ENCODE measurements at regions of chr1 and their contacts with region 1.

Region 1: GRCh38 chr1:161225534-161226319 is at the start of gene TOMM40L:
- DNase-seq: peak; percentile 87
- H3K4me3 Mint-ChIP-seq: peak within 1 kb of the TSS; percentile 99
- H3K27ac Mint-ChIP-seq: peak within 1 kb of the TSS; percentile 100
- H3K4me1 Mint-ChIP-seq: peaks cover 24% of the 10 kb centered on the region
- H3K27me3 Mint-ChIP-seq: peaks cover 3% of the 10 kb centered on the region
- total RNA-seq, gene TOMM40L: 25.3 and 28.0 TPM in 2 replicates

Region 2: GRCh38 chr1:160575112-160575664 is 650.5 kb before region 1 on chr1:
- intact Hi-C with region 1: no loop called
- DNase-seq: no peak
- H3K4me3 Mint-ChIP-seq: peak overlapping the region; percentile 79
- H3K27ac Mint-ChIP-seq: peak overlapping the region; percentile 84
- H3K4me1 Mint-ChIP-seq: peaks cover 96% of the 10 kb centered on the region
- H3K27me3 Mint-ChIP-seq: no peaks in the 10 kb centered on the region

Region 3: DNA sequence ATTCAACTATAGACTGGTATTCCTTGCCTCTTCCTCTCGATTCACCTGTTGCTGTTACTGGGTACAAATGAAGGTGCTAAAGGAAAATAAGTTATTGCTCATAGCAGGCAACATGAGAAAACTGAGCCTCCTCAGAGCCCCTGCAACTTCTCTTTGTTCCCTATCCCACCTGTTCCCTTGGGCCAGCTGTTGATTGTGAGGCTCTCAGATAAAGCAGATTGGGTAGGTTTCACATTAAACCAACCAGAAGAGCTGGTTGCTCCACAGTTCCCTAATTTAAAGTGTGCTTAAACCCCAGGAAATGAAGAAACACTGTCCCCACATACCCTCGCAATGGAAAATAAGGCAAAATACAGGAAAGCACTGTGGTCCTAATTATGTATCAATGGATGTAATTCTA is 98.1 kb before region 1 on chr1:
- intact Hi-C with region 1: no loop called
- DNase-seq: no peak
- H3K4me3 Mint-ChIP-seq: no peak overlapping the region
- H3K27ac Mint-ChIP-seq: no peak overlapping the region
- H3K4me1 Mint-ChIP-seq: peaks cover 53% of the 10 kb centered on the region
- H3K27me3 Mint-ChIP-seq: no peaks in the 10 kb centered on the region

Region 4: GRCh38 chr1:161159087-161159912 is 66.4 kb before region 1 on chr1 and contains the start of gene USP21:
- intact Hi-C with region 1: loop called (anchors 2 kb)
- DNase-seq: peak; percentile 91
- H3K4me3 Mint-ChIP-seq: peak within 1 kb of the TSS; percentile 88
- H3K27ac Mint-ChIP-seq: peak within 1 kb of the TSS; percentile 86
- H3K4me1 Mint-ChIP-seq: peaks cover 64% of the 10 kb centered on the region
- H3K27me3 Mint-ChIP-seq: no peaks in the 10 kb centered on the region
- total RNA-seq, gene USP21: 32.9 and 38.2 TPM in 2 replicates

Region 5: DNA sequence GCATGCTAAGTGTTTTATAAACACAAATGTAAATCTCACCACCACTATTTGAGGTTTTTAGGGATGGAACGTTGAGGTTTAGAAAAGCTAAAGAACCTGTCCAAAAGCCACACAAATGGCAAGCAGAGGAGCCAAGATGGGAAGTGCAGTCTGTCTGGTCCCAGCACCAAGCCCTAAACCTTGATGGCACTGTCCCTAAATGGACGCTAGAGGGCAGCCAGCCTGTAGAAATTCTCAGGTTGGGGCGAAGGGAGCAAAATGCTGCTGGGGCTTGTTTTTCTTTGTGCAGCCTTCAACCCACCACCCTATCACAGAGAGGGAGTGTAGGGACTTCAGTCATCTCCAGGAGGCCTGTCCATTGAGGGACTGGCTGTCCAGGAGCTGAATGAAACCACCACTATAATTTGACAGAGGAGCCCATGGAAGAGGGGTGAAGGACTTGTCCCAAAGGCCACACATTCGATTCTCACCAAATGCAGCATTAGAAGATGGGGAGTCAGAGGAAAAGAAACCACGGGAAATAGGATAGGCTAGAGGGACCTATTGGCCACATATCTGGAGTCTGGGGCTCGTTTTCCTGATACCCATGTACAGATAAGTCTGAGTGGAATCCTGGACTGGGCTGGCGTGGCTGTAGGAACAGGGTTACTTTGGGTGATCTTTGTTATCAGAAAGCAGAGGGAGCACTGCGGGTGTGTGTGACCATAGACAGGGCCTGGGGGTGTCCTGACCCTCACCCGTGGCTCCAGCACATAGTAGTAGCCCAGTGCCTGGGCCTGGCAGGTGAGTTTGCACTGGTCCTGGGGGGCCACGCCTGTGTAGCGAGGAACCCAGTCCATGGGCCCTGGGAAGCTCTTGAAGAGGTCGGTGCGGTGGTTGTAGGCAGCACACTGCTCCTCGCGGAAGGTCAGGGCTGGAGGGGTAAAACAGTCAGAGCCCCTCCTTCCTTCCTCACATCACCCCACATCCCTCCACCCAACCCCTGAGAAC is 33.0 kb before region 1 on chr1:
- intact Hi-C with region 1: loop called (anchors 1 kb)
- DNase-seq: peak; percentile 63
- H3K4me3 Mint-ChIP-seq: no peak overlapping the region
- H3K27ac Mint-ChIP-seq: peak overlapping the region; percentile 67
- H3K4me1 Mint-ChIP-seq: peaks cover 53% of the 10 kb centered on the region
- H3K27me3 Mint-ChIP-seq: no peaks in the 10 kb centered on the region

Region 6: DNA sequence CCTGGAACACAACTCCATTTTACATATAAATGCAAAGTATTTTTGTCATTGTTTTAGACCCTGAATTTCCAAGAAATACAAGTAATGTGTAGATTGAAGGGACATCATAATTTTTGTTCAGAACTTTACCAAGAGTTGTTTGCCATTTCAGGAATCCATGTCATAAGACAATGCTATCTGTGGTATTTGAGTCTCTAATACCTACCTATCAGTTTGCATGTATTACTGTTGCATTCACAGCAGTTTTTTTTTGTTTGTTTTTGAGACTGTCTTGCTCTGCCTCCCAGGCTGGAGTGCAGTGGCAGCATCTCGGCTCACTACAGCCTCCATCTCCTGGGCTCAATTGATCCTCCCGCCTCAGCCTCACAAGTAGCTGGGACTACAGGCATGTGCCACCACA is 66.9 kb after region 1 on chr1:
- intact Hi-C with region 1: loop called (anchors 1 kb)
- DNase-seq: no peak
- H3K4me3 Mint-ChIP-seq: no peak overlapping the region
- H3K27ac Mint-ChIP-seq: no peak overlapping the region
- H3K4me1 Mint-ChIP-seq: no peaks in the 10 kb centered on the region
- H3K27me3 Mint-ChIP-seq: no peaks in the 10 kb centered on the region

Region 7: DNA sequence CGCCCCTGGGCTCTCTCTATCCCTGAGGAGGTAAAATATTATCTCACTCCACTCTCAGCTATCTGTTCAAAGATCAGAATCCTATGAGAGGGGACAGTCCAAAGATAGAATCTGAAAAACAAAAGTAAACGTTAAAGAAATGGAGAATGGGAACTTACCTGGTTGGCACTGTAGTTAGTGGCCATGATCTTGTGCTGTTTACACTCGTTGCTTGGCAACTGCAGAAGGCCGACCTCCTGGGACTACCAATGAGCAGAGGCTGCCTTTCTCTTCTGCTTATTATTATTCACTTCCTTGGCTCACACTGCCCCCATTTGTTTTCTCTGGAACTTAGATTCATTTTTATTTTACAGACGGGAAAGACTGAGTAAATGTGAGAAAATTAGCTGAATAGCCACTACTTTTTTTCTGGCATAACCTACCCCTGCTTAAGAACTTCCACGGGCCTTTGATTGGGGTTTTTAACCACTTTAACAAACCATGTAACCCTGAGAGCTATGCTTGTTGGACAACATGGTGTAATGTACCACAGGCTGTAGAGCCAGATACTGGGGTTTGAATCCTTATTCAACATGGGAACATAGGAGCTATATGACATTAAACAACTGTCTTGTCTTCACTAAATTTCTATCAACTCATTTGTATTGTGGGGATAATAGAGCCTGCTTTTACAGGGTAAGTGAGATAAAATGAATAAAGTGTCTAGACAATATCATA is 142.1 kb after region 1 on chr1 and contains the start of gene CFAP126:
- intact Hi-C with region 1: loop called (anchors 5 kb)
- DNase-seq: no peak
- H3K4me3 Mint-ChIP-seq: no peak within 1 kb of the TSS
- H3K27ac Mint-ChIP-seq: peak within 1 kb of the TSS; percentile 25
- H3K4me1 Mint-ChIP-seq: peaks cover 21% of the 10 kb centered on the region
- H3K27me3 Mint-ChIP-seq: no peaks in the 10 kb centered on the region
- total RNA-seq, gene CFAP126: not detected in 2 replicates

Region 8: DNA sequence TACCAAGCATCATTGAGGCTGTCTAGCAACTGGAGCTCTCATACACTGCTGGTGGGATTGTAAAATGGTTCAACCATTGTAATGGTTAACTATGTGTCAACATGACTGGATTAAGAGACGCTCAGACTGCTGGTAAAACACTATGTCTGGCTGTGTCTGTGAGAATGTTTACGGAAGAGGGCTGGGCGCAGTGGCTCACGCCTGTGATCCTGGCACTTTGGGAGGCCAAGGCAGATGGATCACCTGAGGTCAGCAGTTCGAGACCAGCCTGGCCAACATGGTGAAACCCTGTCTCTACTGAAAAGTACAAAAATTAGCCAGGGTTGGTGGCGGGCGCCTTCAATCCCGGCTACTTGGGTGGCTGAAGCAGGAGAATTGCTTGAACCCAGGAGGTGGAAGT is 476.5 kb after region 1 on chr1:
- intact Hi-C with region 1: no loop called
- DNase-seq: no peak
- H3K4me3 Mint-ChIP-seq: no peak overlapping the region
- H3K27ac Mint-ChIP-seq: no peak overlapping the region
- H3K4me1 Mint-ChIP-seq: no peaks in the 10 kb centered on the region
- H3K27me3 Mint-ChIP-seq: peaks cover 29% of the 10 kb centered on the region

Region 9: GRCh38 chr1:161766102-161766981 is 540.6 kb after region 1 on chr1 and contains the start of gene ATF6:
- intact Hi-C with region 1: loop called (anchors 1 kb)
- DNase-seq: peak; percentile 77
- H3K4me3 Mint-ChIP-seq: peak within 1 kb of the TSS; percentile 97
- H3K27ac Mint-ChIP-seq: peak within 1 kb of the TSS; percentile 94
- H3K4me1 Mint-ChIP-seq: peaks cover 37% of the 10 kb centered on the region
- H3K27me3 Mint-ChIP-seq: no peaks in the 10 kb centered on the region
- total RNA-seq, gene ATF6: 23.9 and 25.5 TPM in 2 replicates